Activated CD4-positive, alpha-beta T cell treated with anti-CD3 and anti-CD28 coated beads for 36 hours (primary cell): ENCODE measurements at regions of chr12 and their contacts with region 1.

Region 1: GRCh38 chr12:9869307-9870161 is at the start of gene CLEC2B:
- DNase-seq: peak; percentile 59
- ATAC-seq: peak; percentile 69
- H3K4me3 Mint-ChIP-seq: peak within 1 kb of the TSS; percentile 77
- H3K27ac Mint-ChIP-seq: peak within 1 kb of the TSS; percentile 95
- H3K4me1 Mint-ChIP-seq: peaks cover 23% of the 10 kb centered on the region
- H3K27me3 Mint-ChIP-seq: no peaks in the 10 kb centered on the region
- total RNA-seq, gene CLEC2B: 21.8 to 25.8 TPM

Region 2: GRCh38 chr12:9750276-9751203 is 119.0 kb before region 1 on chr12:
- CTCF ChIA-PET with region 1: interaction called, 30 read pairs
- POLR2A ChIA-PET with region 1: no interaction called
- intact Hi-C with region 1: loop called (anchors 2 kb)
- DNase-seq: peak; percentile 72
- ATAC-seq: peak; percentile 62
- H3K4me3 Mint-ChIP-seq: peak overlapping the region; percentile 53
- H3K27ac Mint-ChIP-seq: peak overlapping the region; percentile 51
- H3K4me1 Mint-ChIP-seq: peaks cover 46% of the 10 kb centered on the region
- H3K27me3 Mint-ChIP-seq: no peaks in the 10 kb centered on the region

Region 3: DNA sequence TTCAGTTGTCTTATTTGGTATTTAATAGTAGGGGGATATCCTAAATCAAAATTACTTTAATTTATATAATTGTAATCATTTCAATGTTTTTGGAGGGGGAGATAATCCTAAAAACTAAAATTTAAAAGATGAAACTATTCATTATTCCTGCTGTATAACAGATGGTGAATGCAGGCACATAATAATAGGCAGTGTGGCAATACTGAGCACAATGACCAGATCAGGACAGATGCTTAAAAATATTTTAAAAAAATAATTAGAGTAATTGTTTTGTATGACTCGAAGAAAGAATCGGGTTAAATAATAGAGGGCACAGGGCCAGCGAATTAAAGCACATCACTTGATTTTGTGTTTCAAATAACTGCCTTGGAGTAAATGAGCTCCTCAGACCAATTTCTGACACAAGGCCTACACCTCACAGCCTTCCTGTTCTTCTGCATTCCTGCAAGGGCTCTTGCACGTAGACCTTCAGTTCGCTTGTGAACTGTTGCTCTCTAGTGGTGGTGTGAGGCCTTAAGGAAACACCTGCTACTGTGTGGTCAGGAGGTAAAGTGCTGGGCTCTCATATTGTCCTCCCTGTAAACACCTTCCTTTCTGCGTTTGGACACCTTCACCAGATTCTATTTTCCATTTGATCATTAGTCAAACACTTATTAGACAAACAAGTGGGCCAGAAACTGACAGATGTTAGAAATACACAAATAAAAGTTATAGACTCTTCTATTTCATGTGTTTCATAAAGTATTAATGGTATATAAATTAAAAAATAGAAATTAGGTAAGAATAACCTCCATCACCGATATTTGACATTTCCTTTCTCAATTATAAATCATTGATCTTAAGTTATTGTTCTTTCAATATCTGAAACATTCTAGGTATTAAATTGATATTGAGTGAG is 71.6 kb before region 1 on chr12:
- CTCF ChIA-PET with region 1: interaction called, 16 read pairs
- POLR2A ChIA-PET with region 1: no interaction called
- intact Hi-C with region 1: loop called (anchors 1 kb)
- DNase-seq: peak; percentile 81
- ATAC-seq: peak; percentile 84
- H3K4me3 Mint-ChIP-seq: peak overlapping the region; percentile 72
- H3K27ac Mint-ChIP-seq: peak overlapping the region; percentile 92
- H3K4me1 Mint-ChIP-seq: peaks cover 42% of the 10 kb centered on the region
- H3K27me3 Mint-ChIP-seq: no peaks in the 10 kb centered on the region

Region 4: DNA sequence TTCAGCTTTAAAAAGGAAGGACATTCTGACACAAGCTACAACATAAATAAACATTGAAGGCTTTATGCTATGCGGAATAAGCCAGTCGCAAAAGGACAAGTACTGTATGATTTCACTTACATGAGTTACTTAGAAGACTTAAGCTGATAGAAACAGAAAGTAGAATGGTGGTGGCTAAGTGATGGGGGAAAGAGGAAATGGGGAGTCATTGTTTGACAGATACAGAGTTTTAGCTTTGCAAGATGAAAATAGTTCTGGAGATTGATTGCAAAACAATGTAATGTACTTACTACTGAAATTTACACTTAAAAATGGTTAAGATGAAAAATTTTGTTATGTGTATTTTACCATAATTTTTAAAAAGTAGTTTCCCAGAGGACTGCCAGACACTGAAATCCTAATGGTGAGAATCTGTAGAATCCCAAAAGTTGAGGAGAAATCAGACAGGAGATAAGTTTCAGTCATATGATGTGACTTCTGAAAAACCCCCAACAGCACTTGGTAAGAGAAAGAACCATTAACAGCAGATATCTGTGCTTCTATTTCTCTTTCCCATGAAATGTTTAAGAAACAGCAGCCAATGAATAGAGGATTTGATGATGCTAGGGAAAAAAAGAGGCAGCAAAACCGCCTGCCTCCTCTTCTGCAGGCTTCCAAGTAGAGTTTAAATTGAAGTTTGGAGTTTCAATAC is 79.2 kb after region 1 on chr12:
- CTCF ChIA-PET with region 1: no interaction called
- POLR2A ChIA-PET with region 1: no interaction called
- intact Hi-C with region 1: loop called in 1 of 2 experiments (anchors 5 kb)
- DNase-seq: no peak
- ATAC-seq: peak; percentile 95
- H3K4me3 Mint-ChIP-seq: no peak overlapping the region
- H3K27ac Mint-ChIP-seq: peak overlapping the region; percentile 9
- H3K4me1 Mint-ChIP-seq: peaks cover 47% of the 10 kb centered on the region
- H3K27me3 Mint-ChIP-seq: no peaks in the 10 kb centered on the region

Region 5: GRCh38 chr12:10721651-10722501 is 852.3 kb after region 1 on chr12:
- CTCF ChIA-PET with region 1: no interaction called
- POLR2A ChIA-PET with region 1: no interaction called
- intact Hi-C with region 1: loop called in 1 of 2 experiments (anchors 5 kb)
- DNase-seq: peak; percentile 74
- ATAC-seq: peak; percentile 68
- H3K4me3 Mint-ChIP-seq: peak overlapping the region; percentile 91
- H3K27ac Mint-ChIP-seq: peak overlapping the region; percentile 91
- H3K4me1 Mint-ChIP-seq: peaks cover 25% of the 10 kb centered on the region
- H3K27me3 Mint-ChIP-seq: peaks cover 29% of the 10 kb centered on the region